Right ventricle myocardium inferior (tissue), 1 donor: ENCODE measurements at regions of chr9 and their contacts with region 1.

Region 1: DNA sequence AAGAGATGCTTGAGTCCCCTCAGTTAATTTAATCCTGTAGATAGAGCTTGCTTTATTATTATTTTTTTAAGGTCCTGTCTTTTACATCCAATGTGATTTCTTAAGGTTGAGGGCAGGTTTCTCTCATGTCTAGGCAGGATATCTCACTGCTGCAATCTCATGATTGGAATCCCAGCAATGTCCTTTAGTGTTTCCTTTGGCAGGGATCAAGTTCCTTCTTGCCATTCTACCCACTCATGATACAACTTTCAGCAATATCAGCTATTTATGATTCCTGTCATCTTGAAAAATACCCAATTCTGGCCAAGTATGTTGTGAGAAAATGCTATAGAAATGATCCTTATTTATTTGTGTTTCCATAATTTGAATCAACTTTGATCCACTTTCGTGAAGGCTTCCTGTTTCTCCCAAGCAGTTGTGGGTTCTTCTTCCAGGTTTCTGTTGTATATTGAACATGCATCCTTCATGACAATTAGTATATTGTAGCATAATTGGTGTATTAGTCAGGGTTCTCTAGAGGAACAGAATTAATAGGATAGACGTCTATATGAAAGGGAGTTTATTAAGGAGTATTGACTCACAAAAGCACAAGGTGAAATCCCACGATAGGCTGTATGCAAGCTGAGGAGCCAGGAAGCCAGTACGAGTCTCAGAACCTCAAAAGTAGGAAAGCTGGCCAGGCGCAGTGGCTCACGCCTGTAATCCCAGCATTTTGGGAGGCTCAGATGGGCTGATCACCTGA is 18.4 kb upstream of the VPS13A start:
- DNase-seq: no peak
- ATAC-seq: no peak

Region 2: DNA sequence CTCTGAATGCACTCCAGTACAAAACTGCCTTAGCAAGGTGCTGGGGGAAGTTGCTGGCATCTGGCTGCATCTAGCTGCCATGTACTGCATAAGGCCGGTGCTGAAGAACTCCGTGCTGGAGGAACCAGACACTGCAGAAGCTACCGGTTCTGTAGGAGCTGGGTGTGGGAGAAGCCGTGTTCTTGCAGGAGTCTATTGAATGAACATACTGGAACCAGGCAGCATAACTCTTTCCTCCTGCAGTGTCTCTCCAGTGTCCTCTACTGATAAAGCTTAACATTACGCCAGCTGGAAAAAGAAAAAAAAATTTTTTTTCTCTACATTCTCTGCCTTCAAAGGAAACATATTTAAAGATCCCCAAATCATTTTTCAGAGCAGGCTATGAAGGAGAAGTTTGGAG is 56.9 kb after region 1 on chr9:
- intact Hi-C with region 1: loop called (anchors 2 kb)
- DNase-seq: no peak
- ATAC-seq: no peak